ENCODE measurements at regions of chr17 and their contacts with region 1.

Region 1: DNA sequence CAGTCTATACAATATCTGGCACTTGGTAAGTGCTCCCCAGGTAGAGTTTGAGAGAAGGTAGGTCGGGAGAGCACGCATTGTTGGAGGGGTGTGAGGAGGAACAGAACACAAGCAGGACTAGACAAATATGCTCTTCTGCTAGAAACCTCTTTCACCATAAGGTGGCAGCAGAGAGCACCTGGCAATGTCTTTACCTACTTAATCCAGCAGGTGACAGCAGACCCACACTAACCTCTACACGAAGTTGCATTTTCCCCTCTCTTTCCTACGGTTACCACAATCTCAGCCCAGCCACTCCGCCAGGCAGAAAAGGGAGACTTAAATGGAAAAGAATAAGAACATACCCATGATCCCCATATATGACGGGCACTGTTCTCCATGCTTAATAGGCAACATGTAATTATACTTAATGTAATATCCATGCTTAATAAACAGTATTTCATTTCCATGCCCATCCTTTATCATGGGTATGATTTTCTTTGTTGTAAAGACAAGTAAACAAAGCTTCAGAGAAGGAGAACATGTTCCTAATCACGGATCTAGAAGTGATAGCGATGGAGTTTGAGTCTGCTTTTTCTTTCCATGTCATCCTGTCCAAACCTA is 55.1 kb upstream of the CCL2 start:
- DNase-seq: peak; percentile 41
- H3K4me3 ChIP-seq: no peak overlapping the region
- CTCF ChIP-seq: peak; percentile 100

Region 2: GRCh38 chr17:34156741-34157589 is 43.1 kb before region 1 on chr17:
- CTCF ChIA-PET with region 1: no interaction called
- POLR2A ChIA-PET with region 1: no interaction called
- DNase-seq: no peak
- H3K4me3 ChIP-seq: no peak overlapping the region
- CTCF ChIP-seq: no peak

Region 3: GRCh38 chr17:34171245-34171818 is 28.7 kb before region 1 on chr17:
- CTCF ChIA-PET with region 1: interaction called, 30 read pairs
- POLR2A ChIA-PET with region 1: no interaction called
- DNase-seq: no peak
- H3K4me3 ChIP-seq: no peak overlapping the region
- CTCF ChIP-seq: peak; percentile 80

Region 4: GRCh38 chr17:34220754-34221395 is 20.8 kb after region 1 on chr17:
- CTCF ChIA-PET with region 1: interaction called, 14 read pairs
- POLR2A ChIA-PET with region 1: no interaction called
- DNase-seq: no peak
- H3K4me3 ChIP-seq: no peak overlapping the region
- CTCF ChIP-seq: no peak

Region 5: GRCh38 chr17:34306466-34306865 is 106.4 kb after region 1 on chr17:
- CTCF ChIA-PET with region 1: interaction called, 183 read pairs
- POLR2A ChIA-PET with region 1: no interaction called
- DNase-seq: no peak
- H3K4me3 ChIP-seq: no peak overlapping the region
- CTCF ChIP-seq: peak; percentile 53

Region 6: GRCh38 chr17:34337701-34338100 is 137.7 kb after region 1 on chr17:
- CTCF ChIA-PET with region 1: interaction called, 14 read pairs
- POLR2A ChIA-PET with region 1: no interaction called
- DNase-seq: no peak
- H3K4me3 ChIP-seq: no peak overlapping the region
- CTCF ChIP-seq: no peak

Measured in AG04449 (cell line).